Activated naive CD4-positive, alpha-beta T cell treated with anti-CD3 and anti-CD28 coated beads for 36 hours (primary cell): ENCODE measurements at regions of chr17 and their contacts with region 1.

Region 1: DNA sequence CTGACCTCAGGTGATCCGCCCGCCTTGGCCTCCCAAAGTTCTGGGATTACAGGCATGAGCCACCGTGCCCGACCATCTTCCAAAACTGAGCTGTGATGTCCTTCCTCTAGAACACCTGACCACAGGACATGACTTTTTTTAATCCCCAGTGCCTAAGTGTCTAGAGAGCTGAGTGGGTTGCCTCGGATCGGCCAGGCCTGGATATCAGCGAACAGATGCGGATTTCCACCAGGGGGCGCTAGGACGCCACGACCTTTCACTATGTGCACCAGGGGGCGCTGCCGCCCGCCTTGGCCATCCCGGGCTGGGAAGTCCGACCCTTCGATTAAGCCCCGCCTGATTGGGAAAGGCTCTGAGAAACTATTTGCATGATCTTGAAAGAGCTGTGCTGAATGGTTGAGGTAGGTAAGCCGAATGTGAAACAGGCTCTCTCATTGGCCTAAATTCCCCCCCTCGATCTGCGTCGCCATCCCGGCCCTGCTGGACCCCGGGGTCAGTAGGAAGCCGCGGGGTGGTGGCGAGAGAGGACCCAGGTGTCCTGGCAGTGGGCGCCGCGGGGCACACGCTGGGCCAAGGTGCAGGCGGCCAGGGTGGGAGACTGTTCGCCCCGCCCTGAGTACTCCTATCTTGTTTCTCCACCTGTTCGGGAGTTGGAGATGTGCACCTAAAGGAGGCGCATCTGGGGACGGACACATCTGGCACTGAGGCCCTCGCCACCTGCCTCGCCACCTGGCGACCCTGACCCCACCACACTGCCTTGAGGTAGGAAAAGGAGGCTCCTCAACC is at the start of gene ACBD4:
- DNase-seq: peak; percentile 98
- H3K4me3 Mint-ChIP-seq: peak within 1 kb of the TSS; percentile 90
- H3K27ac Mint-ChIP-seq: peak within 1 kb of the TSS; percentile 75
- H3K4me1 Mint-ChIP-seq: peaks cover 8% of the 10 kb centered on the region
- H3K27me3 Mint-ChIP-seq: peaks cover 4% of the 10 kb centered on the region
- total RNA-seq, gene ACBD4: 12.3 to 12.7 TPM

Region 2: GRCh38 chr17:44899069-44899782 is 236.2 kb before region 1 on chr17 and contains the start of gene EFTUD2:
- CTCF ChIA-PET with region 1: interaction called, 3 read pairs
- intact Hi-C with region 1: loop called (anchors 1 kb)
- DNase-seq: peak; percentile 94
- H3K4me3 Mint-ChIP-seq: peak within 1 kb of the TSS; percentile 90
- H3K27ac Mint-ChIP-seq: peak within 1 kb of the TSS; percentile 97
- H3K4me1 Mint-ChIP-seq: peaks cover 25% of the 10 kb centered on the region
- H3K27me3 Mint-ChIP-seq: peaks cover 2% of the 10 kb centered on the region
- total RNA-seq, gene EFTUD2: 170 to 176 TPM

Region 3: DNA sequence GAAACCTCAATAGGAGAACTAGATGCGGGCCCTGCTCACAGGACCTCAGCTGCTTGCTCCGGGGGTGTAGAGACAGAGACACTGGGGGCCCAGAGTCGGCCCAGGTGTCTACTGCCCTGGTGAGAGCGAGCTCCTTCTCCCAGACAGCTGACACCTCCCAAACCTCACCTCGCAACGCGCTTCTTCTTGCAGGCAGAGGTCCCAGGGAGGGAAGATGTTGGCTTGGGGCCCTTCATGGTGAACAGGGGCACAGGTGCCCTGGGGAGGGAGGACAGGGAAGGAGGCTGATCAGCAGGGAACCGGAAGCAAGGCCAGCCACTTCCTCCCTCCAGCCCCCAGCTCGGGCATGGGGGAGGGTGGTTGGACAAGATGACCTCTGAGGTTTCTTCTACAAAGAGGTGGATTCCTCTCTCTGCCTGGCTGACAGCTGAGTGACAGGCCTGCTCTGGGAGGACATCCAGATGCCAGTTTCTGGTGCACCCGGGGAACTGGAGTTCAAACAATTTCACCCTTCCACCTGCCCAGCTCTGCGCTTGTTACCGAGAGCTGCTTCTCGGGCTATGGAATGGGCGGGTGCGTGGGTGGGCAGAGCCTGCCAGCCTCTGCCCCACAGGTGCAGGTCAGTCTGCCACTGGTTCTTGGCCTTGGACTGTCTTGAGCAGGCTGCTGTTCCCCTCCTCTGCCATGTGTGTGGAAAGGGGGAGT is 208.4 kb before region 1 on chr17:
- CTCF ChIA-PET with region 1: no interaction called
- intact Hi-C with region 1: no loop called
- DNase-seq: peak; percentile 3
- H3K4me3 Mint-ChIP-seq: no peak overlapping the region
- H3K27ac Mint-ChIP-seq: no peak overlapping the region
- H3K4me1 Mint-ChIP-seq: no peaks in the 10 kb centered on the region
- H3K27me3 Mint-ChIP-seq: peaks cover 6% of the 10 kb centered on the region

Region 4: DNA sequence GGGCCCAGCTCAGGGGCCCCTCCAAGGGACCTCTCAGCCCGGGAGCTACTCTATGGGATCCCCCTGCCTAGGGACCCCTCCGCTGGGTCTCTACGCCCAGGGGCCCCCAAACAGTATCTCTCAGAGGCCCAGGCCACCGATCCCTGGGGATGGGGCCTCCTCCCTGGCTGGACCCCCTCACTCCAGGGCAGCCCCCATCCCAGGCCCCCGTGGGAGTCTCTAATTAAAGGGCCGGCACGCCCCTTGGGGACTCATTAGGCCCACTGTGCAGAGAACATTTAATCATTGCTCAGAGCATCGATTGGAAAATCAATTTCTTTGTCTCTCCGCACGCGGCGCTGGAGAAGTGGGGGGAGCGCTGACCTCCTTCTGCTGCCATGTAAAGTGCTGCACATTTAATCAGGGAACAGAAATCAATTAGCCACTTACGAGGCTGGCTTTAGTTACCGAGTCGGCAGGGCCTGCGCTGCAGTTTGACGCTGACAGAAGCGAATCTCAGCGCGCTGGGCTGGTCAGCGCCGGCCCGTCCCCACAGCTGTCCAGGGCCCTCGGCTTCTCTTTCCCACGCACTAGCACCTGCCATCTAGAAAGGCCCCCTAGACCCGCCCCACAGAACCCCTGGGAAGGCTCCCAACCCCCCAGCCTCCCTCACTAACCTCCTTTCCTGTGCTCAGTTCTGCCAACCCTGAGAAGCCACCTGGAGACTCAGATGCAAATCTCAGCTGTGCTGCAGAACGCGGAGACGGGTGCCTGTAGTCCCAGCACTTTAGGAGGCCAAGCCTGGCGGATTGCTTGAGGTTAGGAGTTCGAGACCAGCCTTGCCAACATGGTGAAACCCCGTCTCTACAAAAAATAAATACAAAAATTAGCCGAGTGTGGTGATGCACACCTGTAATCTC is 147.1 kb before region 1 on chr17:
- CTCF ChIA-PET with region 1: no interaction called
- intact Hi-C with region 1: no loop called
- DNase-seq: no peak
- H3K4me3 Mint-ChIP-seq: no peak overlapping the region
- H3K27ac Mint-ChIP-seq: no peak overlapping the region
- H3K4me1 Mint-ChIP-seq: peaks cover 12% of the 10 kb centered on the region
- H3K27me3 Mint-ChIP-seq: peaks cover 27% of the 10 kb centered on the region

Region 5: DNA sequence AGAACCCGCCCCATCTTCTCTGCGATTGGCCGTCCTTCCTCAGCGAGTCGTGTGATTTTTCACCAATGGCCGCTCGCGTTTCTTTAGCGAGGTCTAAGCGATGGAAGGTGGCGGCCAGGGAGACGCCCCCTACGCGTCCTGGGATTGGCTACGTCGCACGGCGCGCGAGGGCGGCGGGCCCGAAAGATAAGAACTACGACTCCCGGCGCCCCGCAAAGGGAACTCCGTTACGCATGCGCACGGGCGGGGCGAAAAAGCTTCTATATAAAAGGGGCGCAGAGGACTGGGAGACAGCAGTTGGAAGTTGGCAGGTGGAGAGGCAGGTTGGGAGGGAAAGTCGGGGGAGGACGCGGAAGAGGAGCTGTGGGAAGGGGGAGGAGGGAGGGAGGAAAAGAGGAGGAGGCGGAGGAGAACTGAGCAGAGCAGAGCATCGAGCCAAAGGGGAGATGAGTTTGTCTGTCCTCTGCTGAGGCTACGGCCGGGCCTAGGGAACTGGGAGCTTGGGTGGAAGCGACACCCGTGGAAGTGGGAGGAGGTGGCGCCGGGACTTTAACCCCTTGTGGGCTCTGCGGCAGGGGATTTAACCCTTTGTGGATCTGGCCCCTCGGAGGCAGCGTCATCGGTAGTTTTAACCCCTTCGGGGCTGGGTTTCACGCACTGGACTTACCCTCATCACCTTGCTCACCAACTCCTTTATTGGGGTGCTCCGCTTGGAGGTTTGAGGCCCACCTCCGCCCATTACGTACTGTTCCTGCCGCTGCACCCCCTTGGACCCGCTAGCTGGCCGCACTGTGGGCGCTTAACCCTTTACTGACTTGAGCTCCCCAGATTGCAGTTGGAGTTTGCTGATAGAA is 13.0 kb after region 1 on chr17 and contains the start of gene HEXIM1:
- CTCF ChIA-PET with region 1: interaction called, 252 read pairs
- intact Hi-C with region 1: loop called (anchors 1 kb)
- DNase-seq: peak; percentile 99
- H3K4me3 Mint-ChIP-seq: peak within 1 kb of the TSS; percentile 97
- H3K27ac Mint-ChIP-seq: peak within 1 kb of the TSS; percentile 100
- H3K4me1 Mint-ChIP-seq: peaks cover 42% of the 10 kb centered on the region
- H3K27me3 Mint-ChIP-seq: no peaks in the 10 kb centered on the region
- total RNA-seq, gene HEXIM1: 24.3 to 24.7 TPM

Region 6: GRCh38 chr17:45184144-45184543 is 48.8 kb after region 1 on chr17:
- CTCF ChIA-PET with region 1: interaction called, 12 read pairs
- intact Hi-C with region 1: no loop called
- DNase-seq: no peak
- H3K4me3 Mint-ChIP-seq: no peak overlapping the region
- H3K27ac Mint-ChIP-seq: no peak overlapping the region
- H3K4me1 Mint-ChIP-seq: no peaks in the 10 kb centered on the region
- H3K27me3 Mint-ChIP-seq: no peaks in the 10 kb centered on the region

Region 7: GRCh38 chr17:45218895-45219661 is 83.7 kb after region 1 on chr17:
- CTCF ChIA-PET with region 1: interaction called, 12 read pairs
- intact Hi-C with region 1: no loop called
- DNase-seq: peak; percentile 95
- H3K4me3 Mint-ChIP-seq: peak overlapping the region; percentile 86
- H3K27ac Mint-ChIP-seq: peak overlapping the region; percentile 88
- H3K4me1 Mint-ChIP-seq: peaks cover 26% of the 10 kb centered on the region
- H3K27me3 Mint-ChIP-seq: no peaks in the 10 kb centered on the region

Region 8: DNA sequence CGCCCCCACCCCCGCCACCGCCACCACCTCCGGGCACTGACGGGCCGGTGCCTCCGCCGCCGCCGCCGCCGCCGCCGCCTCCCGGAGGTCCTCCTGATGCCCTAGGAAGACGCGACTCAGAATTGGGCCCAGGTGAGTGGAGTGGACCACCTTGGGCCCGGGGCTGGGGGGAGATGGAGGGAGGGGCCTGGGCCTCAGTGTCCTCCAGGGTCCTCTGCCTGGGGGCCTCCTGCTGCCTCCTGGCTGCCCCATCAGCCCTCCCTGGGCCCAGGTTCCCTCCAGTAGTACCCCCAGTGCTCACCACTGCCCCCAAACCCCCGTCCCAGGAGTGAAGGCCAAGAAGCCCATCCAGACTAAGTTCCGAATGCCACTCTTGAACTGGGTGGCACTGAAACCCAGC is 106.6 kb after region 1 on chr17:
- CTCF ChIA-PET with region 1: no interaction called
- intact Hi-C with region 1: no loop called
- DNase-seq: no peak
- H3K4me3 Mint-ChIP-seq: no peak overlapping the region
- H3K27ac Mint-ChIP-seq: peak overlapping the region; percentile 24
- H3K4me1 Mint-ChIP-seq: peaks cover 20% of the 10 kb centered on the region
- H3K27me3 Mint-ChIP-seq: no peaks in the 10 kb centered on the region

Region 9: DNA sequence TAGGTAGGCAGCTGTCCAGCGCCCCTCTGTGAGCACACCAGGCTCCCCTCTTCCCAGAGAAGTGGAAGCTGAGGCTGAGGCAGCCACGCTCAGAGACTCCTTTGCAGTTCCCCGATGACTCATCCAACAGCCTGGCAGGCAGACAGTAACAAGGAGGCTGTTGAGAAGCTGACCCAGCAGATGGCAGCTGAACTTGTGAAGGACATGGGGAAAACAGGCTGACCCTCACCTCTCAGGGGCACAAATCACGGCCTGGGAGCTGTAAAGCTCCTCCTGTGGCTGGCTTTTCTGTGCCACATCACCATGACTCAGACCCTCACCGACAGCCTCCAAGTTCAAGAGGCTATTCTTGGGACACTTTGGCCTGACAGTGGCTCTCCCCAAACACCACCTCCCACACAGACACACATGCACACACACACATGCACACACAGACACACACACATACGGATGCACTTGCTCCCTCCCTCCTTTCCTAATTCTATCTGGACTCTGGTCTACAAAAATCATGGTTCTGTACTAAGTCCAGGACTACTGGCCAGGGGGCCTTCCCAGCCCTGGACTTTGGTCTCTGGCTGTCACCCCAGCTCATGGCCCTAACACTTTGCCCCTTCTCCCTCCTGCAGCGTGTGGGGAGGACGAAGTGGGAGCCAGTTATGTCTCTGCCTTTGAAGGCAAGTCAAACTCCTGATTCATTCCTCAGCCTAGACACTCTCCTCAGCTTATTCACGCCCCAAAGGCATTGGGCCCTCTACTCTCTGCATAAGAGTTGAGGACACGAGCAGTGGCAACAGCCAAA is 158.2 kb after region 1 on chr17:
- CTCF ChIA-PET with region 1: no interaction called
- intact Hi-C with region 1: no loop called
- DNase-seq: peak; percentile 60
- H3K4me3 Mint-ChIP-seq: no peak overlapping the region
- H3K27ac Mint-ChIP-seq: peak overlapping the region; percentile 68
- H3K4me1 Mint-ChIP-seq: peaks cover 57% of the 10 kb centered on the region
- H3K27me3 Mint-ChIP-seq: no peaks in the 10 kb centered on the region

Region 10: GRCh38 chr17:45385331-45385997 is 250.1 kb after region 1 on chr17:
- CTCF ChIA-PET with region 1: interaction called, 7 read pairs
- intact Hi-C with region 1: loop called (anchors 1 kb)
- DNase-seq: peak; percentile 94
- H3K4me3 Mint-ChIP-seq: no peak overlapping the region
- H3K27ac Mint-ChIP-seq: no peak overlapping the region
- H3K4me1 Mint-ChIP-seq: peaks cover 13% of the 10 kb centered on the region
- H3K27me3 Mint-ChIP-seq: no peaks in the 10 kb centered on the region